ENCODE measurements at regions of chr3 and their contacts with region 1.

Region 1: DNA sequence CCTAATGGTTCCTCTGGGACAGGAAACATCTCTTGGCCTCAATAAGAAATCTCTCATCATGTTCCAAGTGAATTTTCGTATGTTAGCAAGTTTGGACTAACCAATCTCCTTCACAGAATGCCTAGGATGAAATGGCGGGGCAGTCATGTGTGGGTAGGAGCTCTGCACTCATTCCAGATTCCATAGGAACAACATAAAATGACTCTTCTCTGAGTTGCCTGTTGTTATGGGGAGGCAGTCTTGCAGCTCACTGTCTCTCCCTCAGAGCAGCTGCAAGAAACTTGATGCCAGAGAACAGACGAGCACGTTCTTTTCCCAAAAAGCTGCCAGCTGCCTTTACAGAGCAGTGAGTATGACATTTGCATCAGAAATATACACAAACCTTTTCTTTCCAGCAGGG is 34.1 kb downstream of the SPATA12 start:
- DNase-seq: no peak
- ATAC-seq: no peak
- H3K4me3 Mint-ChIP-seq: no peak overlapping the region
- H3K27ac Mint-ChIP-seq: no peak overlapping the region
- H3K4me1 Mint-ChIP-seq: peaks cover 4% of the 10 kb centered on the region
- H3K27me3 Mint-ChIP-seq: peaks cover 6% of the 10 kb centered on the region
- CTCF ChIP-seq: no peak

Region 2: GRCh38 chr3:56702490-56703315 is 391.9 kb before region 1 on chr3:
- CTCF ChIA-PET with region 1: no interaction called
- POLR2A ChIA-PET with region 1: no interaction called
- intact Hi-C with region 1: loop called (anchors 10 kb)
- DNase-seq: no peak
- ATAC-seq: peak; percentile 71
- H3K4me3 Mint-ChIP-seq: no peak overlapping the region
- H3K27ac Mint-ChIP-seq: no peak overlapping the region
- H3K4me1 Mint-ChIP-seq: peaks cover 12% of the 10 kb centered on the region
- H3K27me3 Mint-ChIP-seq: no peaks in the 10 kb centered on the region
- CTCF ChIP-seq: peak; percentile 53

Region 3: GRCh38 chr3:56960234-56960917 is 134.2 kb before region 1 on chr3:
- CTCF ChIA-PET with region 1: no interaction called
- POLR2A ChIA-PET with region 1: no interaction called
- intact Hi-C with region 1: no loop called
- DNase-seq: no peak
- ATAC-seq: peak; percentile 42
- H3K4me3 Mint-ChIP-seq: no peak overlapping the region
- H3K27ac Mint-ChIP-seq: no peak overlapping the region
- H3K4me1 Mint-ChIP-seq: peaks cover 12% of the 10 kb centered on the region
- H3K27me3 Mint-ChIP-seq: peaks cover 3% of the 10 kb centered on the region
- CTCF ChIP-seq: no peak

Region 4: GRCh38 chr3:57120040-57120439 is 25.5 kb after region 1 on chr3:
- CTCF ChIA-PET with region 1: no interaction called
- POLR2A ChIA-PET with region 1: no interaction called
- intact Hi-C with region 1: no loop called
- DNase-seq: no peak
- ATAC-seq: no peak
- H3K4me3 Mint-ChIP-seq: no peak overlapping the region
- H3K27ac Mint-ChIP-seq: no peak overlapping the region
- H3K4me1 Mint-ChIP-seq: no peaks in the 10 kb centered on the region
- H3K27me3 Mint-ChIP-seq: peaks cover 22% of the 10 kb centered on the region
- CTCF ChIP-seq: no peak

Region 5: DNA sequence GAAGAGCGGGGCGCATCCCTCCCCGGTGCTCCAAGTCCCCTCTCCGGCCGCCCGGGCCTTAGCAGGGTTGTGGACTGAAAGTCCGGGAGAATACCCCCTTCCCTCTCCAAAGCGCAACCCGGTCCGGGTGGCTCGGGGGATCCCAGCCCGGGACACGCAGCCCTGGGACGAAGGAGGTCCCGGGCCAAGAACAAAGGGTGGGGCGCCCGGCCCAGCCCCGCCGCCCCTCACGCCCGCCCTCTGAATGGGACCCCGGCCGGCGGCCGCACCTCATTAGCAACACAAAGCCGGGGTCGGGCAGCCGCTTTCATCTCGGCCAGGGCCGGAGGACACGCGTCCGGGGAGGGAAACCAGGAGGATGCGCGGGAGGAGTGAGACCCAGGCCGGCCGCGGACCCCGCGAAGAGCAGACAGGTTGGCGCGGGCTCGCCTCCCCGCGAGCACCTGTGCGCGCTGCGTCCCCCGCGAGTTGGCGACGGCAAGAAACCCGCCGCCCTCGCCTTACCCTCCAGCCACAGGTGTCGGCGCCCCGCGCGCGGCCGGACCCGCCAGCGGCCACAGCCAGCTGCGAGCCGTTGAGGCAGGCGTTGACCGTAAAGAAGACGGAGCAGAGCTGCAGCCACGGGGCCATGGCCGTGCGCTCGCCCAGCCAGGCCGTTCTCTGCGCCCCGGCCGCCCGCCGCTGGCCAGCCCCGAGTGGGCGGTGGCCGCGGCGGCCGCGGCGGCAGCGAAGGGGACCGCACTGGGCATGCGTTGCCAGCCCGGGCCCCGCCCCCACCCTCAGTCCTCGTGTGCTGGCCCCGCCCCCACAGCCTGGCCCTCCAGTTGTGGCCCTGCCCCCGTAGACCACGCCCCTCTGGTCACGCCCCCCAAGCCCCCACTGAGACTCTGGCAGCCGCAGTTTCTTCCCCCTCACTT is 70.3 kb after region 1 on chr3 and contains the start of gene IL17RD:
- CTCF ChIA-PET with region 1: no interaction called
- POLR2A ChIA-PET with region 1: no interaction called
- intact Hi-C with region 1: no loop called
- DNase-seq: peak; percentile 60
- ATAC-seq: peak; percentile 93
- H3K4me3 Mint-ChIP-seq: peak within 1 kb of the TSS; percentile 84
- H3K27ac Mint-ChIP-seq: no peak within 1 kb of the TSS
- H3K4me1 Mint-ChIP-seq: peaks cover 11% of the 10 kb centered on the region
- H3K27me3 Mint-ChIP-seq: peaks cover 48% of the 10 kb centered on the region
- CTCF ChIP-seq: no peak
- total RNA-seq, gene IL17RD: not detected in 2 replicates

Region 6: DNA sequence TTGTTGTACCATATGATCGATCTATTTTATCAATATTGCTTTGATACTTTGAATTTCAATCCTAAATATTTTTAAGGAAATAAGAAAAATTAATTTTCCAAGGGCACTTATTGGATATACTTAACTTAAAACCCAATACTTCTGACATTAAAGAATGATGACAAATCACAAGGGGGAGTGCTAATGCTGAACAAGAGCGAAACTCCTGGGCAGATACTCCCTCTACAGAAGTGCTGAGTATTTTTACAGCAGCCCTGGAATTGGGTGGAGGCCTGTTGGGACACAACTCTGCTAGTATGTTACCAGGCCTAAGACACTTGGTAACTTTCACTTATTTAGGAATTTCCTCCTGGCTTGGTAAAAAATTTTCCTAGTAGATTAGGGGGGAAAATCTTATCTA is 552.1 kb after region 1 on chr3:
- CTCF ChIA-PET with region 1: no interaction called
- POLR2A ChIA-PET with region 1: no interaction called
- intact Hi-C with region 1: no loop called
- DNase-seq: no peak
- ATAC-seq: no peak
- H3K4me3 Mint-ChIP-seq: no peak overlapping the region
- H3K27ac Mint-ChIP-seq: peak overlapping the region; percentile 4
- H3K4me1 Mint-ChIP-seq: peaks cover 10% of the 10 kb centered on the region
- H3K27me3 Mint-ChIP-seq: no peaks in the 10 kb centered on the region
- CTCF ChIP-seq: no peak

Measured in activated B cell treated with CpG ODN at 0.5 μM for 24 hours (primary cell).